GM18951 (cell line): ENCODE measurements at regions of chr12 and their contacts with region 1.

Region 1: GRCh38 chr12:117119592-117120198 is 20.5 kb upstream of the TESC start:
- POLR2A ChIP-seq: no peak

Region 2: DNA sequence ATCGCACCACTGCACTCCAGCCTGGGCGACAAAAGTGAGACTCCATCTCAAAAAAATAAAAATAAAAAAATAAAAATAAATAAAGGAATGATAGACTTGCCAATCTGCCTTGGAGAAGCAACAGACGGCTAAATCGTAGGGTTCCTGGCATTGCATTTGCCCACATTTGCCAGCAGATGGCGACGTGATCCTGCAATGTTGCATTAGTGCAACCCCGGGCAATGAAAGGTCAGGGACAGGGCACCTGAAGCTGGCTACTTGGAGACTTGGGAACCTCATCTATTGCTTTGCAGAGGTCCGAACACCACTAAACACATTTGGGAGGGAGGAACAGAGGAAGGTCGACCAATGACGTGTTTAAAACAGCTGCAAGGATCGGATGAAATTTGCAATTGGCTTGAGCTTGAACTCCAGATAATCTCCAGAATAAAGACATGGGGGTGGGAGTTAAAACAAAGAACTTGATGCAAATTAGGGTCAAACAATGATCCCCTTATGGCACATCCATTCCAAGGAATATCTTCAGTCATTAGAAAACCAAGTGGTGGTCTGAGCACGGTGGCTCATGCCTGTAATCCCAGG is 416.4 kb before region 1 on chr12:
- in situ Hi-C with region 1: loop called (anchors 10 kb)
- POLR2A ChIP-seq: no peak

Region 3: DNA sequence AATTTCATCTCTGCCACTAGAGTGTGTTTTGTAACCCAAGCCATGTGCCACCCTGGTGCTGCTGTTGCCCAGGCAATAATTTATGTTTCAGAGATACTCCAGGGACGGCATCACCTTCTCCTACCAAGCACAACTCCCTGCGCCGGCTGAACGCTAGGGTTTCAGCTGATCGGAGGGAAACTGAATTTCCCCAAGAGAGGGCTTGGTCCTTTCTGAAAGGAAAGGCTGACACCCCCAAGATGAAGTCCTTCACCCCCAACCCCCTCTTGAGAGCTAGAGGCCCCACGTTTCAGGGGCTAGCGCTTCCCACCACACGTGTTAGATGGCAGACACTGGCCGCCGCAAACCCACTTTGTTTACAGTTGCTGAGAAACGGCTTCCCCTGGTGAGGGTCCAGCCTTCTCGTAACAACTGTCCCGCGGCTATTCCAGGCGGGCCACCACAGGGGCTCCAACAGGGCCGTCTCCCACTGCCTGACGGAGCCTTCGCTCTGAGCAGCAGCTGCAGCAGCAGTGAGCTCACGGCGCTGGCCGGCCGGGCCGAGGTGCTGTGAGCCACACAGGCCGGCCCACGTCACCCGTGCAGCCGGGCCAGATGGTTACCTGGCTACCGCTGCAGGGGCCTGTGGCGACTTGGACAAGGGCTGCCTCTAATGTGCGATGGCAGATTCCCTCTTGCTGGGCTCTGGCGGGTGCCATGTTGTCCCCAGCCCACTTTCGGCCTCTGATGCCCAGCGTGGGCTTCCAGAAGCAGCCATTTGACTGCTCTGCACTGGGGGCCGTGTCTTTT is 86.9 kb before region 1 on chr12:
- in situ Hi-C with region 1: loop called (anchors 10 kb)
- POLR2A ChIP-seq: no peak

Region 4: DNA sequence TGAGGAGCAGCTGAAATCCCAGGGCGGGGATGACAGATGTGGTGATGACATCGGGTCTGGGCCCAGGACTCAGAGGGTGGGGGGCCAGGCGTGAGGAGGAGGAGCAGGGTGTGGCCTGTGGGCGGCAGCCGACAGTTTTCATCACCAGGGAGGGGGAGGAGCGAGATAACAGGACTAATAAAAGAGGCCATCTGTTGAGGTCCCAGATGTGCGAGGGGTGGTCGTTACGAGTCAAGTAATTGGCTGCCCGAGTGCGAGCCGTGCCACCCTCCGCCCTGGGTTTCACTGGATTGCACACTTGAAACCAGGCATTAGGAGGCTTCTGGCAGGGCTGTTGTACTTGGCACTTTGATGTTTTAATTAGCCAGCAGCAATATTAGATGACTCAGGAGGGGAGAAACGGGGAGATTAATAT is 174.5 kb after region 1 on chr12:
- in situ Hi-C with region 1: no loop called
- POLR2A ChIP-seq: no peak